CD8-positive, alpha-beta T cell (primary cell): ENCODE measurements at regions of chr12 and their contacts with region 1.

Region 1: GRCh38 chr12:31728917-31729640 is at the start of gene AMN1:
- DNase-seq: peak; percentile 97 to 100 (median 98)
- ATAC-seq: peak; percentile 89
- H3K4me3 ChIP-seq: peak within 1 kb of the TSS; percentile 72 to 76
- H3K4me3 Mint-ChIP-seq: peak within 1 kb of the TSS; percentile 99
- H3K27ac ChIP-seq: peak within 1 kb of the TSS; percentile 91 to 92
- H3K27ac Mint-ChIP-seq: peak within 1 kb of the TSS; percentile 99
- H3K4me1 ChIP-seq: peaks cover 34% of the 10 kb centered on the region
- H3K4me1 Mint-ChIP-seq: peaks cover 65% of the 10 kb centered on the region
- H3K27me3 ChIP-seq: no peaks in the 10 kb centered on the region
- H3K27me3 Mint-ChIP-seq: no peaks in the 10 kb centered on the region
- CTCF ChIP-seq: no peak
- total RNA-seq, gene AMN1: 5.9 to 6.2 TPM

Region 2: GRCh38 chr12:31325877-31326631 is 403.0 kb before region 1 on chr12 and contains the start of gene SINHCAF:
- CTCF ChIA-PET with region 1: no interaction called
- POLR2A ChIA-PET with region 1: no interaction called
- intact Hi-C with region 1: loop called (anchors 2 kb)
- DNase-seq: peak; percentile 94 to 99 (median 99)
- ATAC-seq: peak; percentile 55
- H3K4me3 ChIP-seq: peak within 1 kb of the TSS; percentile 81 to 97
- H3K4me3 Mint-ChIP-seq: peak within 1 kb of the TSS; percentile 92
- H3K27ac ChIP-seq: peak within 1 kb of the TSS; percentile 92 to 96
- H3K27ac Mint-ChIP-seq: peak within 1 kb of the TSS; percentile 93
- H3K4me1 ChIP-seq: peaks cover 22% of the 10 kb centered on the region
- H3K4me1 Mint-ChIP-seq: peaks cover 31% of the 10 kb centered on the region
- H3K27me3 ChIP-seq: no peaks in the 10 kb centered on the region
- H3K27me3 Mint-ChIP-seq: no peaks in the 10 kb centered on the region
- CTCF ChIP-seq: no peak
- total RNA-seq, gene SINHCAF: 93.7 to 108 TPM

Region 3: DNA sequence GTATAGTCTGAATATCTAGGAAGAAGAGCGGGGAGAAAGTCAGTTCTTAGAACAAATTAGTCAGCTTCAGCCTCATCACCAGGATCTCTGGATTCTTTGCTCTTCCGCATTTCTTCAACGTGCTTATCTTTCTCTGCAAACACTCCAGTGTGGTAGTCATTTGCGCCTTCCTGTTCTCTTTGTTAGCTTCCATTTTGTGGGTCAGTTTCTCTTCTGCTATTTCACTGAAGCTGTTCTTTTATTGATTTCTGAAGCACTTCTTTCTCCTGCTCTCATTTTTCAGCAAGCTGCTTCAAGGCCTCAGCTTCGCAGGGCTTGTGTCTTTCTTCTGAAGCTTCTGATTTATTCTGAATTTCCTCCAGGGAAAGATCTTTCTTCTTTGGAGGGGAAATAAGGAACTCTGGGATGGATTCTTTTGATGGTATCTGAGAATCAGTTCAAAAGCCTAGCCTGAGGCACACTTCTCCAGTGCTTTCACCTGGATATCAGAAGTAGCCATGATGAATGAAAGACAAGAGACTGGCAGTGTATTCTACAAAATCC is 13.7 kb before region 1 on chr12:
- CTCF ChIA-PET with region 1: no interaction called
- POLR2A ChIA-PET with region 1: interaction called, 14 read pairs
- intact Hi-C with region 1: no loop called
- DNase-seq: peak in 1 of 9 experiments; percentile 20
- ATAC-seq: no peak
- H3K4me3 ChIP-seq: no peak overlapping the region
- H3K4me3 Mint-ChIP-seq: no peak overlapping the region
- H3K27ac ChIP-seq: no peak overlapping the region
- H3K27ac Mint-ChIP-seq: peak overlapping the region; percentile 42
- H3K4me1 ChIP-seq: no peaks in the 10 kb centered on the region
- H3K4me1 Mint-ChIP-seq: peaks cover 26% of the 10 kb centered on the region
- H3K27me3 ChIP-seq: no peaks in the 10 kb centered on the region
- H3K27me3 Mint-ChIP-seq: no peaks in the 10 kb centered on the region
- CTCF ChIP-seq: no peak

Region 4: DNA sequence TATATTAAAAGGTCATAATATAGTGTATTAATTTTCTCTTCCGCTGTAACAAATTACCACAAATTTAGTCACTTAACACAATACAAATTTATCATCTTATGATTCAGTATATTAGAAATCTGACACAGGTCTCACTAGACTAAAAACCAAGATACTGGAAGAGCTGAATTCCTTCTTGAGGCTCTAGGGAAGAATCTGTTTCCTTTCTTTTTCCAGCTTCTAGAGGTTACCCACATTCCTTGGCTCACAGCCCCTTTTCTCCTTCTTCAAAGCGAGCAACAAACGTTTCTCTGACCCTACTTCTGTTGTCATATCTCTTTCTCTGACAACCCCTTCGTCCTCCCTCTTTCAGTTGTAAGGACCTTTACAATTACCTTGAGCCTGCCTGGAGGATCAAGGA is 43.1 kb after region 1 on chr12:
- CTCF ChIA-PET with region 1: no interaction called
- POLR2A ChIA-PET with region 1: no interaction called
- intact Hi-C with region 1: no loop called
- DNase-seq: no peak
- ATAC-seq: no peak
- H3K4me3 ChIP-seq: no peak overlapping the region
- H3K4me3 Mint-ChIP-seq: no peak overlapping the region
- H3K27ac ChIP-seq: no peak overlapping the region
- H3K27ac Mint-ChIP-seq: no peak overlapping the region
- H3K4me1 ChIP-seq: peaks cover 10% of the 10 kb centered on the region
- H3K4me1 Mint-ChIP-seq: peaks cover 32% of the 10 kb centered on the region
- H3K27me3 ChIP-seq: no peaks in the 10 kb centered on the region
- H3K27me3 Mint-ChIP-seq: no peaks in the 10 kb centered on the region
- CTCF ChIP-seq: no peak

Region 5: GRCh38 chr12:31804185-31804504 is 75.1 kb after region 1 on chr12:
- CTCF ChIA-PET with region 1: interaction called, 3 read pairs
- POLR2A ChIA-PET with region 1: interaction called, 9 read pairs
- intact Hi-C with region 1: loop called in 1 of 2 experiments (anchors 5 kb)
- DNase-seq: peak in 1 of 9 experiments; percentile 16
- ATAC-seq: no peak
- H3K4me3 ChIP-seq: peak overlapping the region; percentile 33 to 56
- H3K4me3 Mint-ChIP-seq: peak overlapping the region; percentile 94
- H3K27ac ChIP-seq: peak overlapping the region; percentile 34 to 68
- H3K27ac Mint-ChIP-seq: peak overlapping the region; percentile 97
- H3K4me1 ChIP-seq: peaks cover 33% of the 10 kb centered on the region
- H3K4me1 Mint-ChIP-seq: peaks cover 55% of the 10 kb centered on the region
- H3K27me3 ChIP-seq: no peaks in the 10 kb centered on the region
- H3K27me3 Mint-ChIP-seq: no peaks in the 10 kb centered on the region
- CTCF ChIP-seq: no peak

Region 6: DNA sequence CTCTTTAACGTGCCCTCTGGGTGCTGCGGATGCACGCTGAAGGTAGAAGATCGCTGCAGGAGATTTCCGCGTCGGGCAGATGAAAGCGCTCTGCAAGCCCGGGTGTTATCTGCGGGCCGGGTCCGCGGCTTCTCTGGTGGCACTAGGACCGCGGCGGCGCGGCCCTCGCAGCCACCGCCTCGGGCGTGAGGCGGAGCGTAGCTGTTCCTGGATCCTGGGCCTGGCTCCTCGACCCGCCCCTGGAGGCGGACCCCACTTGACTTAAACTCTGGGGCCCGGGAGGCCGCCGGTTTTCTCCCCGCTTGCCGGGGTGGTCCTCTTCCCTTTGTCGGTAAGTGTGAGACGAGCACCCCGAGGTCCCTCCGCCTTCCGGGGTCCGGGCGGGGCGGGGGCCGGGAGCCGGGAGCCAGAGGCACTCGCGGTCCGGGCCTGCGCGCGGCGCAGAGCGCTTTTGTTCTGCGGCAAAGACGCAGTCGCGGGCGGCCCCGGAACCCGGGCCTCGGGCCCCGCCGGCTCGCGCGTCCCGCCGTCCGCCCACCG is 230.2 kb after region 1 on chr12 and contains the start of gene RESF1:
- CTCF ChIA-PET with region 1: interaction called, 8 read pairs
- POLR2A ChIA-PET with region 1: interaction called, 59 read pairs
- intact Hi-C with region 1: loop called (anchors 1 to 2 kb)
- DNase-seq: peak; percentile 70 to 95 (median 87)
- ATAC-seq: peak; percentile 73
- H3K4me3 ChIP-seq: peak within 1 kb of the TSS; percentile 75 to 76
- H3K4me3 Mint-ChIP-seq: peak within 1 kb of the TSS; percentile 96
- H3K27ac ChIP-seq: peak within 1 kb of the TSS; percentile 75 to 80
- H3K27ac Mint-ChIP-seq: peak within 1 kb of the TSS; percentile 97
- H3K4me1 ChIP-seq: peaks cover 47% of the 10 kb centered on the region
- H3K4me1 Mint-ChIP-seq: peaks cover 64% of the 10 kb centered on the region
- H3K27me3 ChIP-seq: no peaks in the 10 kb centered on the region
- H3K27me3 Mint-ChIP-seq: no peaks in the 10 kb centered on the region
- CTCF ChIP-seq: no peak
- total RNA-seq, gene RESF1: 117 to 119 TPM

Region 7: GRCh38 chr12:32679091-32679919 is 950.2 kb after region 1 on chr12 and contains the start of gene DNM1L:
- CTCF ChIA-PET with region 1: no interaction called
- POLR2A ChIA-PET with region 1: no interaction called
- intact Hi-C with region 1: loop called (anchors 5 to 10 kb)
- DNase-seq: peak; percentile 85 to 96 (median 93)
- ATAC-seq: peak; percentile 98
- H3K4me3 ChIP-seq: peak within 1 kb of the TSS; percentile 62 to 76
- H3K4me3 Mint-ChIP-seq: peak within 1 kb of the TSS; percentile 94
- H3K27ac ChIP-seq: peak within 1 kb of the TSS; percentile 71 to 87
- H3K27ac Mint-ChIP-seq: peak within 1 kb of the TSS; percentile 90
- H3K4me1 ChIP-seq: peaks cover 11% of the 10 kb centered on the region
- H3K4me1 Mint-ChIP-seq: peaks cover 30% of the 10 kb centered on the region
- H3K27me3 ChIP-seq: no peaks in the 10 kb centered on the region
- H3K27me3 Mint-ChIP-seq: no peaks in the 10 kb centered on the region
- CTCF ChIP-seq: no peak
- total RNA-seq, gene DNM1L: 76.1 to 77.1 TPM